HepG2 (cell line): ENCODE measurements at regions of chr16 and their contacts with region 1.

Region 1: DNA sequence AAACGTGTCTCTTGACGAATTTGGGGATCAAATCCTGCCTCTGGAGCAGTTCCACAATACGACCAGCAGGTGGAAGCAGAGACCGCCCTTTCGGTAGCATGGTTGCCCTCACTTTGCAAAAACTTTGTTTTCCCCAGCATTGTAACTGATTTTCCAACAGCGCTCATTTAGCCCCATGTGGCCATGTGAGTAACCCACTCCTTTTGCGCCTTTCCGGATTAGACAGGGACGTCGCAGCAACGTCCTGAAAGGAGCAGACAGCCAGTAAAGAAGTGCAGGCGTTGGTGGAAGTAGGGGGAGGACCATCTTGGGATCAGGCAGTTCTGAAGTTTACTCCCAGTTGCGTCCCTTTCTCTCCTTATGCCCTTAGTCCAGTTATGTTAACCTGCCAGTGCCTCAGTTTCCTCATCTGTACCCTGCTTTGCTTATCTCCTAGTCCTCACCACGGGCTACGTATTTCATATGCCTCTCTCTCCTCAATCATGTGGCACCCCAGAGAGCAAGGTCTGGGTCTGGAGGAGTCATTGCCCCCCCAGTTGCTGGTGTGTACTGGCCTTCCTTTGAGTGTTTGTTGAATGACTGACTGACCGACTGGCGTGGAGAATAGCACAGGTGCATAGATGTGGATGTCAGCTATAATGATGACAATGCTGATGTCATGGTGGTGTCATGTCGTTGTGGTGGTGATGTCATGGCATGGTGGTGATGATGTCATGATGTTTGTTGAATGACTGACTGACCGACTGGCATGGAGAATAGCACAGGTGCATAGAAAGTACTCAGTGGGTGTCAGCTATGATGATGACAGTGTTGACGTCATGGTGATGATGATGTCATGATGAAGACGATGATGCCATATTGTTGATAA is 22.3 kb downstream of the TMEM114 start:
- DNase-seq: peak; percentile 97
- ATAC-seq: peak; percentile 68
- H3K4me3 ChIP-seq: no peak overlapping the region
- H3K27ac ChIP-seq: no peak overlapping the region
- H3K4me1 ChIP-seq: peaks cover 53% of the 10 kb centered on the region
- H3K27me3 ChIP-seq: 0 out of 5 replicates have a peak, but pooled peaks cover 0 to 3% of the 10 kb centered on the region in 2 experiments
- CTCF ChIP-seq: peak; percentile 100
- EP300 ChIP-seq: 0 out of 4 replicates have a peak, but pooled peaks of 1 of the 2 experiments have one; percentile 25
- POLR2A ChIP-seq: no peak
- RAD21 ChIP-seq: peak; percentile 100

Region 2: DNA sequence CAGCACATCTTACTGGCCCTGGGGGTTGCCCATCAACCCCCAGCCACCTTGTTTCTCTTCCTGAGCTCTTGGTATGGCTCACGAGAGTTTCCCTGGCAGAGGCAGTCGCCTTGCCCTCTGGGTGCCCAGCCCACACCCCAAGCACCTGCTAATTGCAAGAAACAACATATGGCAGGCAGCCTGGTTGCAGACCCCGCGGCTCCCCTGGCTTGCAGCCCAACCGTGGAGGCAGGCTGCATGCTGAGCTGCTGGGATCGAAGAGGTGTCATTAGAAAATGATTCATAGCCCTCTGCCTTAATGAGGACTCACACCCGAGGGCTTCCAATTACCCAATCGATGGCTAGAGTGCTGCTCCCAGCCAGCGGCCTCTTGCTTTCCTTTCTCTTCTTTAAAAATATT is 93.4 kb before region 1 on chr16:
- CTCF ChIA-PET with region 1: no interaction called
- POLR2A ChIA-PET with region 1: no interaction called
- in situ Hi-C with region 1: no loop called
- intact Hi-C with region 1: no loop called
- DNase-seq: no peak
- ATAC-seq: no peak
- H3K4me3 ChIP-seq: no peak overlapping the region
- H3K27ac ChIP-seq: no peak overlapping the region
- H3K4me1 ChIP-seq: no peaks in the 10 kb centered on the region
- H3K27me3 ChIP-seq: peaks cover 0 to 20% of the 10 kb centered on the region in 2 experiments; a peak in 1 of 5 replicates
- CTCF ChIP-seq: no peak
- EP300 ChIP-seq: no peak
- POLR2A ChIP-seq: no peak
- RAD21 ChIP-seq: no peak

Region 3: GRCh38 chr16:8552487-8553221 is 15.3 kb before region 1 on chr16:
- CTCF ChIA-PET with region 1: no interaction called
- POLR2A ChIA-PET with region 1: no interaction called
- in situ Hi-C with region 1: no loop called
- intact Hi-C with region 1: no loop called
- DNase-seq: peak; percentile 77
- ATAC-seq: peak; percentile 42
- H3K4me3 ChIP-seq: peak overlapping the region in 1 of 3 experiments; percentile 29; a peak in 2 of 6 replicates
- H3K27ac ChIP-seq: peak overlapping the region; percentile 90
- H3K4me1 ChIP-seq: peaks cover 76% of the 10 kb centered on the region
- H3K27me3 ChIP-seq: peaks cover 7 to 31% of the 10 kb centered on the region in 2 experiments; a peak in 3 of 5 replicates
- CTCF ChIP-seq: no peak
- EP300 ChIP-seq: peak in 1 of 2 experiments; percentile 81; a peak in 2 of 4 replicates
- POLR2A ChIP-seq: no peak
- RAD21 ChIP-seq: no peak

Region 4: GRCh38 chr16:8621572-8622314 is 53.8 kb after region 1 on chr16 and contains the start of gene METTL22:
- CTCF ChIA-PET with region 1: no interaction called
- POLR2A ChIA-PET with region 1: interaction called, 4 read pairs
- in situ Hi-C with region 1: loop called (anchors 5 kb)
- intact Hi-C with region 1: loop called (anchors 1 kb)
- DNase-seq: peak; percentile 88
- ATAC-seq: peak; percentile 93
- H3K4me3 ChIP-seq: peak within 1 kb of the TSS; percentile 76 to 92 (median 91)
- H3K27ac ChIP-seq: peak within 1 kb of the TSS; percentile 78
- H3K4me1 ChIP-seq: peaks cover 44% of the 10 kb centered on the region
- H3K27me3 ChIP-seq: peaks cover 0 to 25% of the 10 kb centered on the region in 2 experiments; a peak in 3 of 5 replicates
- CTCF ChIP-seq: 0 out of 2 replicates have a peak, but pooled peaks have one; percentile 9
- EP300 ChIP-seq: no peak
- POLR2A ChIP-seq: peak; percentile 93
- RAD21 ChIP-seq: peak; percentile 39; the same call in 1 of the 2 replicates
- total RNA-seq, gene METTL22: 23.3 and 36.2 TPM in 2 replicates

Region 5: DNA sequence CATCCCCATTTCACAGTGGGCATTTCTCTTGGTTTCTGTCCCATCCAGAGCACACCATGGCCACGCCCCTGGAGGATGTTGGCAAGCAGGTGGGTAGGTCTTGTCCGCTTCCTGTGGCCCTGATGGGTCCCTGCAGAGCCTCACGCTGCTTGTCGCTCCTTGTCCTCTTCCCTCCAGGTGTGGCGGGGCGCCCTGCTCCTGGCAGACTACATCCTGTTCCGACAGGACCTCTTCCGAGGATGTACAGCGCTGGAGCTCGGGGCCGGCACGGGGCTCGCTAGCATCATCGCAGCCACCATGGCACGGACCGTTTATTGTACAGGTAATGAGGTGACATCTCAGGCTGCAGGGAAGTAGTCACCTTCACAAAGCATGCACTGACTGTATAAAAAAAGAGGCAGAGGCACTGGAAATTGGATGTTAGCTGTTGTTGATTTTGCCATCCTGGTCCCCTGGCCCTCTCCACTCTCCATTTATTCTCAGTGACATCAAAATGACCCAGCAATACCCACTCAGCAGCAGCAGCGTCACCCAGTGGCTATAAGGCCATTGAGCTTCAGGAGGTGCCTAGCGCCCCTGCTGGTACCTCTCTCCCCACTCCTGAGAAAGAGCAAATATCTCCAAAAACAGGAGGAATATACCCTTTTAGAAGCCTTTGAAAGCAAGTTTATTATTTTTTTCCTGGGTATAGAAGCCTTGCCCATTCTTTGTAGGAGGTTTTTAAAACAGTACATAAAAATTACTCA is 67.2 kb after region 1 on chr16:
- CTCF ChIA-PET with region 1: interaction called, 66 read pairs
- POLR2A ChIA-PET with region 1: no interaction called
- in situ Hi-C with region 1: no loop called
- intact Hi-C with region 1: loop called (anchors 1 kb)
- DNase-seq: peak; percentile 66
- ATAC-seq: peak; percentile 83
- H3K4me3 ChIP-seq: no peak overlapping the region
- H3K27ac ChIP-seq: no peak overlapping the region
- H3K4me1 ChIP-seq: peaks cover 12% of the 10 kb centered on the region
- H3K27me3 ChIP-seq: no peaks in the 10 kb centered on the region
- CTCF ChIP-seq: peak; percentile 71
- EP300 ChIP-seq: no peak
- POLR2A ChIP-seq: no peak
- RAD21 ChIP-seq: peak; percentile 86

Region 6: GRCh38 chr16:8655184-8655717 is 87.3 kb after region 1 on chr16:
- CTCF ChIA-PET with region 1: interaction called, 154 read pairs
- POLR2A ChIA-PET with region 1: no interaction called
- in situ Hi-C with region 1: loop called (anchors 5 kb)
- intact Hi-C with region 1: loop called (anchors 1 kb)
- DNase-seq: peak; percentile 73
- ATAC-seq: peak; percentile 85
- H3K4me3 ChIP-seq: no peak overlapping the region
- H3K27ac ChIP-seq: no peak overlapping the region
- H3K4me1 ChIP-seq: peaks cover 5% of the 10 kb centered on the region
- H3K27me3 ChIP-seq: peaks cover 0 to 2% of the 10 kb centered on the region in 2 experiments; a peak in 2 of 5 replicates
- CTCF ChIP-seq: peak; percentile 92
- EP300 ChIP-seq: no peak
- POLR2A ChIP-seq: no peak
- RAD21 ChIP-seq: peak; percentile 76

Region 7: GRCh38 chr16:8660841-8661301 is 92.9 kb after region 1 on chr16:
- CTCF ChIA-PET with region 1: interaction called, 154 read pairs
- POLR2A ChIA-PET with region 1: no interaction called
- in situ Hi-C with region 1: loop called (anchors 5 kb)
- intact Hi-C with region 1: no loop called
- DNase-seq: peak; percentile 71
- ATAC-seq: peak; percentile 88
- H3K4me3 ChIP-seq: peak overlapping the region in 1 of 3 experiments; percentile 17; a peak in 1 of 6 replicates
- H3K27ac ChIP-seq: no peak overlapping the region
- H3K4me1 ChIP-seq: no peaks in the 10 kb centered on the region
- H3K27me3 ChIP-seq: peaks cover 0 to 2% of the 10 kb centered on the region in 2 experiments; a peak in 2 of 5 replicates
- CTCF ChIP-seq: peak; percentile 99
- EP300 ChIP-seq: no peak
- POLR2A ChIP-seq: no peak
- RAD21 ChIP-seq: peak; percentile 99

Region 8: DNA sequence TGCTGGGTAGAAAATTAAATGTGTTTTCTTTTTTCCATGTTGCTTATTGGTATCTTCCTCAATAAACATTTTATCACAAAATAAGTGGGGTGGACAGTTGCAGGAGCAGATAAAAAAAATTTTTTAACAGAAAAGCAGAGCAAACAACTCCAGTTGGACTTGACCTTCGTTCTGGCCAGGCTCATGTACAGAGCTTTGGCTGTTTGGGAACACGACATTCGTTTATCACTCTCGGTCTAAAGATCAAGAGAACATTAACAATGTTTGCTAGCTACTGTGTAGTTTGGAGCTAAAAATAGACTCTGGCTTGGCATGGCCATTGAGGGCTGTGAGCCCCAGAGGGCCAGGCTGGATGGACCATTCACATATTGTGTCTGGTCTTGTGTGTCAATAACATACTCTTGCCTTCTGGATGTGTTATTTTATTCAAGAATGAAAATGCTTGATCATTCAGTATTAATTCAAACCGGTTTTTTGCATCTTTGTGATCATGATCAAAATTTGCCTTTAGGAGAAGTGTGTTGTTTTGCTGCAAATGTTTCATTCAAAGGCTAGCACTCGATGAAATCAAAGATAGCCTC is 172.9 kb after region 1 on chr16:
- CTCF ChIA-PET with region 1: no interaction called
- POLR2A ChIA-PET with region 1: no interaction called
- in situ Hi-C with region 1: no loop called
- intact Hi-C with region 1: loop called (anchors 5 kb)
- DNase-seq: peak; percentile 100
- ATAC-seq: peak; percentile 99
- H3K4me3 ChIP-seq: peak overlapping the region in 1 of 3 experiments; percentile 0; a peak in 1 of 6 replicates
- H3K27ac ChIP-seq: peak overlapping the region; percentile 48
- H3K4me1 ChIP-seq: peaks cover 34% of the 10 kb centered on the region
- H3K27me3 ChIP-seq: no peaks in the 10 kb centered on the region
- CTCF ChIP-seq: no peak
- EP300 ChIP-seq: peak in 1 of 2 experiments; percentile 86; a peak in 2 of 4 replicates
- POLR2A ChIP-seq: peak in 1 of 2 experiments; percentile 35; a peak in 1 of 4 replicates
- RAD21 ChIP-seq: peak; percentile 64

Region 9: GRCh38 chr16:8806272-8806983 is 238.4 kb after region 1 on chr16:
- CTCF ChIA-PET with region 1: no interaction called
- POLR2A ChIA-PET with region 1: no interaction called
- in situ Hi-C with region 1: no loop called
- intact Hi-C with region 1: no loop called
- DNase-seq: no peak
- ATAC-seq: no peak
- H3K4me3 ChIP-seq: no peak overlapping the region
- H3K27ac ChIP-seq: no peak overlapping the region
- H3K4me1 ChIP-seq: peaks cover under 1% of the 10 kb centered on the region
- H3K27me3 ChIP-seq: no peaks in the 10 kb centered on the region
- CTCF ChIP-seq: no peak
- EP300 ChIP-seq: no peak
- POLR2A ChIP-seq: no peak
- RAD21 ChIP-seq: no peak